CD4-positive, alpha-beta memory T cell (primary cell): ENCODE measurements at regions of chr11 and their contacts with region 1.

Region 1: DNA sequence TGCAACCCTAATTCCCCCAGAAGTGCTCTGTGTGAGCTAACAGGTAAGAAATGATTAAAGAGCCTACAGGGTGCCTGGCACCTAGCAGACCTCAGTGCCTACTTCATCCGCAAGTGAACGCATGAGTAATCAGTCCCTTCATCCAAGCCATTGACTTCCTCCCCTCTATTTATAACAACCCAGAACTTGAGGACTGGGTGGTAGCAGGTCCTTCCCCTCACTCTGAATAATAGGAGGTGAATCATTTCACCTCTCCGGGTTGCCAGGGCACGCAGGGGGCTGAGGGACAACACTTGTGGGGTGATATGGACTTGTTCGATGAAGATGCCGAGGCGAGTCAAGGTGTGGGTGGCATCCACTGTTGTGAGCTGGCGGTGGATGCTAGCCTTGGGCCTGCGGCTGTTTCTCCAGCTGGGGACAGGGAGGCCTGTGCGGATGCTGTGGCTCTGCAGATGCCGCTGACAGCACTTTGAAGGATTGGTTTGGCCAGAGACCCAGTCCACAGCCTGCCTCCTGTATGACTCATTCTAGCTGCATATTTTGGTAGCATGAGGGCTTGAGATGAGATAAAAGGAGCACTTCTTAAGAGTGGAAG is 11.7 kb upstream of the SORL1-AS1 start:
- DNase-seq: peak; percentile 61 to 96 (median 68)
- H3K4me3 ChIP-seq: peak overlapping the region in 1 of 2 donors; percentile 25
- H3K4me3 Mint-ChIP-seq: peak overlapping the region; percentile 62 to 92 (median 84)
- H3K27ac ChIP-seq: peak overlapping the region; percentile 57
- H3K27ac Mint-ChIP-seq: peak overlapping the region; percentile 89 to 98 (median 93)
- H3K4me1 ChIP-seq: peaks cover 100% of the 10 kb centered on the region
- H3K4me1 Mint-ChIP-seq: peaks cover 84 to 99% (median 92%) of the 10 kb centered on the region in 4 donors
- H3K27me3 ChIP-seq: no peaks in the 10 kb centered on the region
- H3K27me3 Mint-ChIP-seq: no peaks in the 10 kb centered on the region

Region 2: GRCh38 chr11:121328967-121329679 is 135.3 kb before region 1 on chr11:
- CTCF ChIA-PET with region 1: interaction called, 6 read pairs
- POLR2A ChIA-PET with region 1: interaction called, 12 read pairs
- intact Hi-C with region 1: no loop called
- DNase-seq: peak in 3 of 5 donors; percentile 15 to 25 (median 22)
- H3K4me3 ChIP-seq: no peak overlapping the region
- H3K4me3 Mint-ChIP-seq: no peak overlapping the region
- H3K27ac ChIP-seq: peak overlapping the region; percentile 31
- H3K27ac Mint-ChIP-seq: no peak overlapping the region
- H3K4me1 ChIP-seq: peaks cover 40% of the 10 kb centered on the region
- H3K4me1 Mint-ChIP-seq: peaks cover 10 to 13% (median 11%) of the 10 kb centered on the region in 4 donors
- H3K27me3 ChIP-seq: no peaks in the 10 kb centered on the region
- H3K27me3 Mint-ChIP-seq: peaks cover 0 to 2% of the 10 kb centered on the region in 2 donors

Region 3: GRCh38 chr11:121446752-121447156 is 17.7 kb before region 1 on chr11:
- CTCF ChIA-PET with region 1: interaction called, 90 read pairs
- POLR2A ChIA-PET with region 1: interaction called, 462 read pairs
- intact Hi-C with region 1: no loop called
- DNase-seq: no peak
- H3K4me3 ChIP-seq: no peak overlapping the region
- H3K4me3 Mint-ChIP-seq: peak overlapping the region in 4 of 8 donors; percentile 41 to 72 (median 64)
- H3K27ac ChIP-seq: no peak overlapping the region
- H3K27ac Mint-ChIP-seq: peak overlapping the region; percentile 64 to 91 (median 81)
- H3K4me1 ChIP-seq: peaks cover 77% of the 10 kb centered on the region
- H3K4me1 Mint-ChIP-seq: peaks cover 57 to 87% (median 71%) of the 10 kb centered on the region in 4 donors
- H3K27me3 ChIP-seq: no peaks in the 10 kb centered on the region
- H3K27me3 Mint-ChIP-seq: no peaks in the 10 kb centered on the region

Region 4: DNA sequence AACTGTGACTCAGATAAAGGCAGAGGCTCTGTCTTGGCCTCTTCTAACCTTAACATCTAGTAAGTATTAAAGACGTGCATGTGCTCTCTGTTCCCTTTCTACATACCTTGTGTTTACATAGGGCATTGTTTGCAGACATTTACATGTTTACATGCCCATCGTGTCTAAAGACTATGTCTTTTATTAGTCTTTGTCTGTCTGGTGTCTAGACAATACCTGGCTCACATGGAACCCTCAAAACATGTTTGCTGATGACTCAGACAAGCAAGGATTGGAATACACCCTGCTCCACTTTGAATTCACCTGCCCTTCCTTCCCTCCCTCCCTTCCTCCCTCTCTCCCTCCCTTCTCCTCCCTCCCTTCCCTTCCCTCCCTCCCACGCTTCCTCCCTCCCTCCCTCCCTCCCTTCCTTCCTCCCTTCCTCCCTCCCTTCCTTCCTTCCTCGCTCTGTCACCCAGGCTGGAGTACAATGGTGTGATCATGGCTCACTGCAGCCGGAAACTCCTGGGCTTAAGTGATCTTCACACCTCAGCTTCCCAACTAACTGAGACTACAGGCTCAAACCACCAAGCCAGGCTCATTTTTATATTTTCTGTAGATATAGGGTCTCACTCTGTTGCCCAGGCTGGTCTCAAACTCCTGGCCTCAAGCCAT is 12.1 kb after region 1 on chr11:
- CTCF ChIA-PET with region 1: interaction called, 7 read pairs
- POLR2A ChIA-PET with region 1: interaction called, 111 read pairs
- intact Hi-C with region 1: no loop called
- DNase-seq: peak in 1 of 5 donors; percentile 53
- H3K4me3 ChIP-seq: no peak overlapping the region
- H3K4me3 Mint-ChIP-seq: no peak overlapping the region
- H3K27ac ChIP-seq: no peak overlapping the region
- H3K27ac Mint-ChIP-seq: peak overlapping the region; percentile 22 to 83 (median 65)
- H3K4me1 ChIP-seq: peaks cover 82% of the 10 kb centered on the region
- H3K4me1 Mint-ChIP-seq: peaks cover 40 to 92% (median 64%) of the 10 kb centered on the region in 4 donors
- H3K27me3 ChIP-seq: no peaks in the 10 kb centered on the region
- H3K27me3 Mint-ChIP-seq: no peaks in the 10 kb centered on the region

Region 5: DNA sequence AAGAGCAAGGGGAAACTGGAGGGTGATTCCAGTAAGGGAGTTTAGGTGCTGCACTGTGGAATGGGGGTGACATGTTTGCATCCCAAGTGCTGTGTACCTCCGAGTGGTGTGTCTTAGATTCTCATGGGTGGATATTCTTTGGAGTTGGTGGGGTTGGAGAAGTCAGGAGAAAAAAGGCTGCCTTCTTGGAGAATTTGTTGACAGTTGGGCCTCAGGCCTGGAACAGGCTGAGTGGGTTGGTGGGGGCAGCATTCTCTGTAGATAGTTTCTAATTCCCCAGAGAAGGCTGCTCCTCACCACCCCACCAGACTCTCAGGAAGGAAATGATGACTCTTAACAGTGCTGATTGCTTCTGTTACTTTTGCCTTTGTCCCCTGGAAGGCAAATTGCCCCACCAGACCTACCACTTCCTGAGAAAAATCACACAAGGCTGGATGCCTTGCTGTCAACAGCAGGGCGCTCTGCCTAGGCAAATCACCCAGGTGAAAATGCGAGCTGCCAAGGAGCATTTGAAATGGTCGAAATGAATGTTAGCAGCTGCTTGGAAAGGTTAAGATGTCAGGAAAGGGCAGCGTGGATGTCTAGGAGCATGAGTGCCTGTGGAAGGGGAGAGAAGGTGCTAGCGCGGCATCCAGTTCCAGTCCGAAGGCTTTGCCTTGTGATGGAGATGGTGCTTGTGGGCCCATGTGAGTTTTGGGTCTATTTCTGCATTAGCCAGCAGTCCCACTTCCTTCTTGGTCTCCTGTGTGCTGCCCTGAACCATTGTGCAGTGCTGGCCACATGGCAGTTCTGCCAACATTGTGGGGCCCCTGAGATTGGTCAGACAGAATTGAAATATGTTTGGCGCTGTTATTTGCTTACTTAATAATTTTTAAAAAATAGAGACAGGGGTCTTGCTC is 18.0 kb after region 1 on chr11:
- CTCF ChIA-PET with region 1: interaction called, 7 read pairs
- POLR2A ChIA-PET with region 1: interaction called, 111 read pairs
- intact Hi-C with region 1: loop called (anchors 1 kb)
- DNase-seq: peak; percentile 67 to 89 (median 72)
- H3K4me3 ChIP-seq: peak overlapping the region; percentile 14 to 30
- H3K4me3 Mint-ChIP-seq: peak overlapping the region; percentile 75 to 86 (median 82)
- H3K27ac ChIP-seq: peak overlapping the region; percentile 53
- H3K27ac Mint-ChIP-seq: peak overlapping the region; percentile 87 to 97 (median 92)
- H3K4me1 ChIP-seq: peaks cover 71% of the 10 kb centered on the region
- H3K4me1 Mint-ChIP-seq: peaks cover 48 to 85% (median 68%) of the 10 kb centered on the region in 4 donors
- H3K27me3 ChIP-seq: no peaks in the 10 kb centered on the region
- H3K27me3 Mint-ChIP-seq: no peaks in the 10 kb centered on the region

Region 6: DNA sequence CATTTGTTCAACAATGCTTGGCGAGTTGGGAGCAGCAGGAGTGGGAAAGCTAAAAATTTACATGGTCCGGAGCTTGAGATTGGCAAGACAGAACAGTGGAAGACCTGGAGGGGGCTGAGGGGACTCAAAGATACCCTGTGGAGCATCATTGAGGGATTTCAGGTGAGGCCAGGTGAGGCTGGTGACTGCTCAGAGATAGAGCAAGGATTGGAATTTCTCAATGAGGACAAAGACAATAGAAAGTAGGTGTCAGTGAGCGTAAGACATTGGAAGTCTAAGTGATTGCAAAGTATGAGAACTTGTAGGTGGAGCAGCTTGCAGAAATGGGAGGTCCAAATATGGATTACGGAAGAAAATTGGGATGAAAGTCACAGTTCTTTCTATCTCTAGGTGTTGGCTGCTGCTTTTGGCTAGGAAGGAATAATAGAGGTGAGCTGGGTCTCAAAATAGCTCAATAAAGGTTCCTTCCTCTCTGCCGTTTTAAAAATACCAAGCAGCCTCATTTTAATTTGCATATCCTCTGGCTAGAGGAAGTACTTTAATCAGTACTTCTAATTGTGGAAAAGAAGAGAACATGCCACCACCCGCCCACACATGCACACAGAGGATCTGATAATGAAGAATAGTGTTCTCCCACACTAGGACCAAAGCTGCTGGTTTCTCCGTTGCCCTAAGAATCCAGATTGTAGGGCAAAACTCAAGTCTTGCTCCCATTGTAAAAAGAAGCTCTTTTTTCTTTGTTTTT is 30.1 kb after region 1 on chr11:
- CTCF ChIA-PET with region 1: interaction called, 6 read pairs
- POLR2A ChIA-PET with region 1: interaction called, 12 read pairs
- intact Hi-C with region 1: no loop called
- DNase-seq: peak; percentile 23 to 43 (median 27)
- H3K4me3 ChIP-seq: no peak overlapping the region
- H3K4me3 Mint-ChIP-seq: peak overlapping the region; percentile 18 to 82 (median 58)
- H3K27ac ChIP-seq: no peak overlapping the region
- H3K27ac Mint-ChIP-seq: peak overlapping the region; percentile 48 to 90 (median 79)
- H3K4me1 ChIP-seq: peaks cover 30% of the 10 kb centered on the region
- H3K4me1 Mint-ChIP-seq: peaks cover 49 to 82% (median 62%) of the 10 kb centered on the region in 4 donors
- H3K27me3 ChIP-seq: no peaks in the 10 kb centered on the region
- H3K27me3 Mint-ChIP-seq: no peaks in the 10 kb centered on the region